Naive thymus-derived CD4-positive, alpha-beta T cell (primary cell): ENCODE measurements at regions of chr10 and their contacts with region 1.

Region 1: DNA sequence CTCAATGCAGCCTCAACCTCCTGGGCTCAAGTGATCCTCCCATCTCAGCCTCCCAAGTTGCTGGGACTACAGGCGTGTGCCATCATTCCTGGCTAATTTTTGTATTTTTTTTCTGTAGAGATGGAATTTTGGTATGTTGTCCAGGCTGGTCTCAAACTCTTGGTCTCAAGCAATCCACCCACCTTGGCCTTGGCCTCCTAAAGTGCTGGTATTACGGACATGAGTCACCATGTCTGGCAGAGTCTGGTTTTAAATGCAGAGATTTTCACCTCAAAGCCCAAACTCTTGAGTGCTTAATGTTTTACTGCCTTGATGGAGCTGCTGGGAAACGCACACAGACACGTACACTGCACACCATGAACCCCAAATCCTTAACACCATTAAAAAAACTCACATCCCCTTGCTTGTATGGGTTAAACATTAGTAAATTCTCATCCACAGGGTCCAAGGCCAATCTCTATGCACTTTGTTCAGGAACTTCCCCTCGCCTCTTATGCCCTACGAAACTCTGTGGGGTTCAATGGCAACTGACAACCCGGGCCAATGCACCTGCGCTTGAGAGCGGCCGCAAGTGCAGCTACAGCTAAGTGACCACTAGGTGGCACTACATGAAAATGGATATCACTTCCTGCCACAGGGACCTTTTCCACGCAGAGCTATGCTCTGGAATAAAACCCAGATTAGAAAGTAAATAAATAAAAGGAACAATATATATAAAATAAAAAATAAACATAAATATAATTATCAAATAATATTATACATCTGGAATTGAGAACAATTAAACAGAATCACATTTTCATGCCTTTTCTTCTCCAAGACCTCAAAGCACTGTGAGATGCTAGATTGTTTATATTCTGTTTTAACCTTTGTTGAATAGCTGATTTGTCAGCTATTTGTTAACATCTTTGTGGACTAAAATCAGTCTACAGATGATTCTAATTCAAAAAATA is 66.9 kb upstream of the AFAP1L2 start:
- DNase-seq: peak; percentile 35 to 75 (median 64)
- ATAC-seq: peak; percentile 92
- H3K4me3 ChIP-seq: no peak overlapping the region
- H3K4me3 Mint-ChIP-seq: peak overlapping the region in 6 of 10 donors; percentile 23 to 64 (median 39)
- H3K27ac ChIP-seq: peak overlapping the region; percentile 47
- H3K27ac Mint-ChIP-seq: peak overlapping the region; percentile 11 to 96 (median 73)
- H3K4me1 ChIP-seq: peaks cover 0 to 10% of the 10 kb centered on the region in 2 donors
- H3K4me1 Mint-ChIP-seq: peaks cover 10 to 54% (median 43%) of the 10 kb centered on the region in 7 donors
- H3K27me3 ChIP-seq: no peaks in the 10 kb centered on the region
- H3K27me3 Mint-ChIP-seq: no peaks in the 10 kb centered on the region

Region 2: DNA sequence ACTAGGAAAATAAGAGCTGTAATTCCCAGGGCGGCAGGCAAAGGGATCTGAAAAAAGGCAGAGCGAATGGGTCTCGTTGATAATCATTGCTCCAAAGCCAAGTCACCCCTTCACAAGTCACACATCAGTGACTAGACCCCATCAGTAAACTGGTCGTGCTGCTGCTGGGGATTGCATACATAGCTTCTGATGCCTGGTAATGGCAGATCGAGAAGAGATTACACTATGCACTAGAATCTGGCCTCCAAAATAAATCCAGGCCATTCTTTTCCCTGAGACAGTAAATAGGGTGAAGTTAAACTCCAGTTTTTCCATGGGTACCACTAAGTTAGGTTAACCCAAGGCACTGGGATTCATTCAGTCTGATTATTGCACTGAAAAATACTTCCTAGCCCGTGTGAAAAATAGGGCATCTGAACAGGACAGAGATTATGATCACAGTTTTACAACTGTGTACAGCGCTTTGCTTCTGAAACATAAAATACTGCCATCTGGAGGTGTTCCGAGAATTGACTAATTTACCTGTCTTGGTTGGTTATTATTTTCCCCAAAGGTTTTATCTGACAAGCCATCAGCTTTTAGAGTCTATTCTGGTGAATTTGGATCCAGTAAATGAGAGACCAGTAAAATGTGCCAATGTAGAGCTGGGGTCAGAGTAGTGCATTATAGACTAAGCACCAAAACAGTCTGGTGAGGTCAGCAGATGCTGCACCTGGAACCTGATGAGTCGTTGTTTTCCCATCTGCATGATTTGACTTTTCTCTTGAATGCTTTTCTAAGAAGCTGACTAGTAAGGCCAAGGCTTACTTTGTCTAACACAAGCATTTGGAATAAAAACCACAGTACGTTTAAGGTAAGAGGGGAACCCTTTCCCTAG is 15.9 kb after region 1 on chr10:
- CTCF ChIA-PET with region 1: interaction called, 11 read pairs
- POLR2A ChIA-PET with region 1: interaction called, 5 read pairs
- intact Hi-C with region 1: loop called in 1 of 2 experiments (anchors 1 kb)
- DNase-seq: no peak
- ATAC-seq: no peak
- H3K4me3 ChIP-seq: no peak overlapping the region
- H3K4me3 Mint-ChIP-seq: no peak overlapping the region
- H3K27ac ChIP-seq: peak overlapping the region; percentile 17
- H3K27ac Mint-ChIP-seq: peak overlapping the region in 8 of 9 donors; percentile 10 to 82 (median 70)
- H3K4me1 ChIP-seq: peaks cover under 1 to 17% of the 10 kb centered on the region in 2 donors
- H3K4me1 Mint-ChIP-seq: peaks cover 14 to 90% (median 78%) of the 10 kb centered on the region in 7 donors
- H3K27me3 ChIP-seq: no peaks in the 10 kb centered on the region
- H3K27me3 Mint-ChIP-seq: no peaks in the 10 kb centered on the region

Region 3: DNA sequence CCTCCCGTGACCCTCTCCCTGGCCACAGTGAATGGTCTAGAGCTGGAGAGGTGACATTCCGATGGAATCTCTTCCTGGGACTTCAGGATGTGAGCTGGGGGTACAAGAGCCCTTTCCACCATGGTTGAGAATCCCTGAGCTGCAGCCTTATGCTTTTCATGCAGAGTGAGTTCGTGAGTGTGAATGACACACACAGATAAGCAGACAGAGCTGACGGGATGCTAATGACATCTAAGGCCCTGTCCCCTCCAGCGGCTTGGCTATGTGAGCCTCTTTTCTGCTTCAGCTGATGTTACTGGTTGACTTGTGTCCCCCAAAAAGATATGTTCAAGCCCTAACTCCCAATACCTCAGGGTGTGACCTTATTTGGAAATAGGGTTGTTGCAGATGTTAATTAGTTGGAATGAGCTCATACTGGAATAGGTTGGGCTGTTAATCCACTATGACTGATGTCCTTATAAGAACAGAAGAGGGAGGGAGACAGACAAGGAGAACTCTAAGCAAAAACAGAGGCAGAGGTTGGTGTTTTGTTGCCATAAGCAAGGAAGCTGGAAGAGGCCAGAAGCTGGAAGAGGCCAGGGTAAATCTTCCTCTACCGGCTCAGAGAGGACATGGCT is 44.2 kb after region 1 on chr10:
- CTCF ChIA-PET with region 1: interaction called, 15 read pairs
- POLR2A ChIA-PET with region 1: interaction called, 8 read pairs
- intact Hi-C with region 1: loop called in 1 of 2 experiments (anchors 1 kb)
- DNase-seq: peak in 1 of 9 donors; percentile 36
- ATAC-seq: no peak
- H3K4me3 ChIP-seq: no peak overlapping the region
- H3K4me3 Mint-ChIP-seq: peak overlapping the region in 9 of 10 donors; percentile 72 to 97 (median 89)
- H3K27ac ChIP-seq: peak overlapping the region; percentile 94
- H3K27ac Mint-ChIP-seq: peak overlapping the region in 8 of 9 donors; percentile 74 to 100 (median 97)
- H3K4me1 ChIP-seq: peaks cover 8 to 90% of the 10 kb centered on the region in 2 donors
- H3K4me1 Mint-ChIP-seq: peaks cover 78 to 98% (median 94%) of the 10 kb centered on the region in 7 donors
- H3K27me3 ChIP-seq: no peaks in the 10 kb centered on the region
- H3K27me3 Mint-ChIP-seq: no peaks in the 10 kb centered on the region

Region 4: DNA sequence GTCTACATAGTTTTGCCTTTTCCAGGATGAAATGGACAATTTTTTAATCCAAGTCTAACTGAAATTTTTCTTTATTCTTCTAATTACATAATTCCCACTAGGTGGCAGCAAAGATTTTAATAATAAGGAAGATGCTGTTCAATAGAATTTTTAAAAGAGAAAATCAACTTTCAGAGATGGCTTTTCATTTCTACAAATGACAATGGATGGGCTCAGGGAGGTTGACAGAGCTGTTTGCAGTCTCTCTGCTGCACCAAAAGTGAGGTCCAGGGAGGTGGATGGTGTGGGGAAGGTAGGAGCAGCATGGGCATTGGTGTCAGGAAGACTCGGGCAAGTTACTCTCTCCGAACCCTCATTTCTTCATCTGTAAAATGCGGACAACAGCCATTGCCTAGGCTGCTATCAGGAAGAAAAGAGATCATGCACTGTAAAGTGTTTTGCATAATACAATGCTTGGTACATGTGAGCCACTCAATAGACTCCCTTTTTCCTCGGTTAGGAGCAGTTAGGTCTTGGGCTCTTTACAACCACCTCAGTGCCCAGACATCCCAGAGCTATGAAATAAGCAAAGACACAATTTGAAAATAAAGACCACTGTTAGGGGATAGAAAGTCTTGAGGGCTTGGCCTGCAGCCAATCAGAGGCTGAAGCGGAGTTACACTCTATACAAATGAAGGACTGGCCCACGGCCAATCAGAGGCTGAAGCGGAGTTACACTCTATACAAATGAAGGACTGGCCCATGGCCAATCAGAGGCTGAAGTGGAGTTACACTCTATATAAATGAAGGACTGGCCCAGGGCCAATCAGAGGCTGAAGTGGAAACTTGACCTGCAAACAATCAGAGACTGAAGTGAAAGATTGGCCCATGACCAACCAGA is 79.8 kb after region 1 on chr10:
- CTCF ChIA-PET with region 1: interaction called, 108 read pairs
- POLR2A ChIA-PET with region 1: interaction called, 7 read pairs
- intact Hi-C with region 1: loop called (anchors 1 kb)
- DNase-seq: peak in 5 of 9 donors; percentile 33 to 50 (median 40)
- ATAC-seq: peak; percentile 26
- H3K4me3 ChIP-seq: no peak overlapping the region
- H3K4me3 Mint-ChIP-seq: no peak overlapping the region
- H3K27ac ChIP-seq: no peak overlapping the region
- H3K27ac Mint-ChIP-seq: peak overlapping the region in 5 of 9 donors; percentile 1 to 61 (median 20)
- H3K4me1 ChIP-seq: peaks cover 6 to 29% of the 10 kb centered on the region in 2 donors
- H3K4me1 Mint-ChIP-seq: peaks cover 16 to 37% (median 33%) of the 10 kb centered on the region in 7 donors
- H3K27me3 ChIP-seq: no peaks in the 10 kb centered on the region
- H3K27me3 Mint-ChIP-seq: peaks cover 0 to 5% (median 0%) of the 10 kb centered on the region in 5 donors

Region 5: GRCh38 chr10:114703377-114704107 is 232.3 kb after region 1 on chr10:
- CTCF ChIA-PET with region 1: interaction called, 6 read pairs
- POLR2A ChIA-PET with region 1: no interaction called
- intact Hi-C with region 1: loop called (anchors 1 kb)
- DNase-seq: peak in 7 of 9 donors; percentile 6 to 46 (median 24)
- ATAC-seq: peak; percentile 67
- H3K4me3 ChIP-seq: no peak overlapping the region
- H3K4me3 Mint-ChIP-seq: no peak overlapping the region
- H3K27ac ChIP-seq: no peak overlapping the region
- H3K27ac Mint-ChIP-seq: no peak overlapping the region
- H3K4me1 ChIP-seq: no peaks in the 10 kb centered on the region
- H3K4me1 Mint-ChIP-seq: no peaks in the 10 kb centered on the region
- H3K27me3 ChIP-seq: no peaks in the 10 kb centered on the region
- H3K27me3 Mint-ChIP-seq: peaks cover 0 to 45% (median 9%) of the 10 kb centered on the region in 5 donors

Region 6: DNA sequence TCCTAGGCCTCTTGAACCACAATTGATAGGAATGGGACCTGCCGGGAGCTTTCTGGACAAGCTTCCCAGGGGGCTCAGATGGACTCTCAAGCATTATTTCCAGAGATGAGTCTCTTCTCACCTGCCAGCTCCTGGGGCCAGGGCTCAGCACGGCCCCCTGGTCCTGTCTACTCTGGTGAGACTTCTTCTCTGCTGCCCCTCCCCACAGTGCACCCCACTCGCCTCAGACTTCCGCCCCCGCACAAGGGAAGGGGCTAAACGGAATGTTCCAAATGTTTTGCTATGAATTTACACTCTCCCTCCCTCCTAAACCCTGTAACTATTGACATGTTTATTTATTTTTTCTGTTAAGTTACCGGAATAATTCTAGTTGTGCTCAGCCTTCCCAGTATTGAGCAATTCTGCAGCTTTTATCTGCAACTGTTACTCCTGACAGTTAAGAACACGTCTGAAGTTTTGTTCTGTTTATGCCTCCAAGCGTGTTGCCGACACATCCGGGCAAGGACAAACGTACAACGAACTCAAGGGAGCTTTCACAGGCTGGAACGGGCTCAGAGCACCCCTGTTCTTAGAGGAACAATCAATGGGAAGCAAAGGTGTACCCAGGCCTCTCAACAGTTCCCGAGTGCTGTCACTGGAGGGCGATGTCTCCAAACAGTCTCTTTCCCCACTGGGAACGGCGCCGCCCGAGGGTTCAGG is 405.5 kb after region 1 on chr10:
- CTCF ChIA-PET with region 1: no interaction called
- POLR2A ChIA-PET with region 1: no interaction called
- intact Hi-C with region 1: loop called in 1 of 2 experiments (anchors 1 kb)
- DNase-seq: peak in 2 of 9 donors; percentile 2 to 55
- ATAC-seq: peak; percentile 63
- H3K4me3 ChIP-seq: no peak overlapping the region
- H3K4me3 Mint-ChIP-seq: no peak overlapping the region
- H3K27ac ChIP-seq: no peak overlapping the region
- H3K27ac Mint-ChIP-seq: no peak overlapping the region
- H3K4me1 ChIP-seq: no peaks in the 10 kb centered on the region
- H3K4me1 Mint-ChIP-seq: peaks cover 0 to 30% (median 12%) of the 10 kb centered on the region in 7 donors
- H3K27me3 ChIP-seq: peaks cover 0 to 5% of the 10 kb centered on the region in 2 donors
- H3K27me3 Mint-ChIP-seq: peaks cover 36 to 76% (median 44%) of the 10 kb centered on the region in 5 donors